RWPE1 (cell line): ENCODE measurements at regions of chr5 and their contacts with region 1.

Region 1: GRCh38 chr5:31613651-31614050 is 25.3 kb upstream of the PDZD2 start:
- DNase-seq: no peak
- H3K27ac ChIP-seq: no peak overlapping the region
- CTCF ChIP-seq: no peak

Region 2: GRCh38 chr5:31161781-31162181 is 451.9 kb before region 1 on chr5:
- CTCF ChIA-PET with region 1: no interaction called
- POLR2A ChIA-PET with region 1: no interaction called
- DNase-seq: no peak
- H3K27ac ChIP-seq: no peak overlapping the region
- CTCF ChIP-seq: no peak

Region 3: DNA sequence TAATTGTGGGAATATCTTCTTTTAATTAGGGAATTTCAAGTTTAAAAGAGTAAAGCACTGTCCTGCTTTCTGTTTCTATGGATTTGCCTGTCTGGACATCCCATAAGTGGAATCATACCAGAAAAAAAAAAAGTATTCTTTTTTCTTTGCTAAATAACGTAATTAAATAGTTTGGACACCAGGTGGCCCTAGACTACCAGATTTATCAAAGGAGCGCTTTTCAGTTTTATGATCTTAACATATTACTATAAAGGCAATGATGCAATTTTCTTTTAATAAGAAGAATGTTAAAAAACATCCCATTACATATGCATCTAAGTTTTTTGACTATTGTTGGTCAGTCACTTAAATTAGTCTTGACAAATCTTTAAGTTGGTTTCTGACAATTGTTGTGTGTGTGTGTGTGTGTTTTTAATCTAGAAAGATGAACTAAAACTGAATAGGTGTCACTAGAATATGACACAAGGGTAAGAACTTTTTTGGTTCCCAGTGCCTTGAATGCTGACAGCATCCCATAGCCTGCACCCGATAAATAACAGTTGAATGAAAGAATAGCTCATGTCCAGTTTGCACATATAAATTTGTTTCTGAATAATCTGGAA is 32.1 kb before region 1 on chr5:
- CTCF ChIA-PET with region 1: no interaction called
- POLR2A ChIA-PET with region 1: no interaction called
- DNase-seq: peak; percentile 29
- H3K27ac ChIP-seq: no peak overlapping the region
- CTCF ChIP-seq: peak; percentile 62

Region 4: GRCh38 chr5:31664566-31664965 is 50.9 kb after region 1 on chr5:
- CTCF ChIA-PET with region 1: interaction called, 10 read pairs
- POLR2A ChIA-PET with region 1: no interaction called
- DNase-seq: no peak
- H3K27ac ChIP-seq: no peak overlapping the region
- CTCF ChIP-seq: no peak